Ovary (tissue), 10 donors: ENCODE measurements at regions of chr4 and their contacts with region 1.

Region 1: DNA sequence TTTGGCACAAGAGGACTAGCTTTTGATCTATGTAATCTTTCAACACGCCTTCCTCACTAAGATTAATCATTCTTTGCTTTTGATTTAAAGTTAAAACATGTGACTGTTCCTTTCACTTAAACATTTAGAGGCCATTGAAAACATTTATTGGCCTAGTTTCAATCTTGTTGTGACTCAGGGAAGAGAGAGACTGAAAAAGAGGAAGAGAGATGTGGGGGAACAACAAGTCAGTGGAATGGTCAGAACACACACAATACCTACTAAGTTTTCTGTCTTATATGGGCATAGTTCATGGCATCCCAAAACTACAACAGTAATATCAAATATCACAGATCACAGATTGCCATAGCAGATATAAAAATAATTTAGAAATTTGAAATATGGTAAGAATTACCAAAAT is 812.9 kb upstream of the AGA start:
- DNase-seq: no peak
- H3K4me3 ChIP-seq: no peak overlapping the region
- H3K27ac ChIP-seq: no peak overlapping the region
- H3K4me1 ChIP-seq: no peaks in the 10 kb centered on the region
- H3K27me3 ChIP-seq: no peaks in the 10 kb centered on the region
- CTCF ChIP-seq: no peak
- EP300 ChIP-seq: no peak
- POLR2A ChIP-seq: no peak

Region 2: DNA sequence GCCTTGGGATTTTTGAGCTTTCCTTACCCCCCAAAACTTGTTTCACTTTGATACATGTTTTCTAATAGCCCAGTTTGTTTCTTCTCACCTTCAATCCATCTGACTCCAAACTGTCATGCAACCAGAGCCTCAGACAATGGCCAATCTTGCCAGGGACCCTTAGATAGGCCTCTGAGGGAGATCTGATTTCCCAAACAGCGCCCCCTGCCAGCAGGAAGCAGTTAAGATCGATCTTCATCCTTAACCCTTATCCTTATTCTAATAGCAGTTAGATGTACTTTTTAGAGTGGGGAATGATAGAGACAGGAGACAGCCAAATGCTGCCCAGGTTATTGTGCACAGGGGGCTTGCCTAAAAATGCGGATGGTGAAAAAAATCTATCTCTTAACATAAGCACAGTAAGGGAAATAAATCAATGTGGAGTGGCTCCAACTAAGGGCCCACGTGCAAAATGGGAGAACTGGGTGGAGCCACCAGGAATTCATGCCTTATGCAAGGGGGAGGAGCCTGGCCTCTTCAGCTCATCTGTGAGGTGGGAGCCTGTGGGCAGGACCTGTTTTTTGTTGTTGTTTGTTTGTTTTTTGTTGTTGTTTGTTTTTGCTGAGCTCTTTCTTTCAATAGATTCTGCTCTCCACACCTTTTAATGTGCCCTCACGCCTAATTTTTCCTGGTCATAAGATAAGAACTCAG is 20.6 kb after region 1 on chr4:
- intact Hi-C with region 1: loop called in 1 of 4 experiments (anchors 1 kb)
- DNase-seq: no peak
- H3K4me3 ChIP-seq: no peak overlapping the region
- H3K27ac ChIP-seq: no peak overlapping the region
- H3K4me1 ChIP-seq: no peaks in the 10 kb centered on the region
- H3K27me3 ChIP-seq: no peaks in the 10 kb centered on the region
- CTCF ChIP-seq: no peak
- EP300 ChIP-seq: no peak
- POLR2A ChIP-seq: no peak